Gastrocnemius medialis (tissue), 4 donors: ENCODE measurements at regions of chr18 and their contacts with region 1.

Region 1: GRCh38 chr18:26893996-26894395 is 28.5 kb upstream of the AQP4 start:
- DNase-seq: no peak
- ATAC-seq: no peak
- H3K4me3 ChIP-seq: peak overlapping the region in 2 of 4 donors; percentile 5 to 12
- H3K27ac ChIP-seq: no peak overlapping the region
- H3K4me1 ChIP-seq: no peaks in the 10 kb centered on the region
- H3K27me3 ChIP-seq: no peaks in the 10 kb centered on the region
- CTCF ChIP-seq: no peak
- POLR2A ChIP-seq: no peak

Region 2: GRCh38 chr18:26941584-26941983 is 47.6 kb after region 1 on chr18:
- in situ Hi-C with region 1: no loop called
- intact Hi-C with region 1: loop called (anchors 10 kb)
- DNase-seq: no peak
- ATAC-seq: no peak
- H3K4me3 ChIP-seq: no peak overlapping the region
- H3K27ac ChIP-seq: no peak overlapping the region
- H3K4me1 ChIP-seq: peaks cover 9 to 10% of the 10 kb centered on the region in 2 donors
- H3K27me3 ChIP-seq: no peaks in the 10 kb centered on the region
- CTCF ChIP-seq: no peak
- POLR2A ChIP-seq: no peak